ENCODE measurements at regions of chr2 and their contacts with region 1.

Region 1: GRCh38 chr2:217845301-217845700 is 157.5 kb downstream of the TNS1 start:
- DNase-seq: no peak
- H3K4me3 ChIP-seq: no peak overlapping the region
- H3K27ac ChIP-seq: no peak overlapping the region
- H3K4me1 ChIP-seq: no peaks in the 10 kb centered on the region
- H3K27me3 ChIP-seq: no peaks in the 10 kb centered on the region
- CTCF ChIP-seq: no peak
- POLR2A ChIP-seq: no peak

Region 2: DNA sequence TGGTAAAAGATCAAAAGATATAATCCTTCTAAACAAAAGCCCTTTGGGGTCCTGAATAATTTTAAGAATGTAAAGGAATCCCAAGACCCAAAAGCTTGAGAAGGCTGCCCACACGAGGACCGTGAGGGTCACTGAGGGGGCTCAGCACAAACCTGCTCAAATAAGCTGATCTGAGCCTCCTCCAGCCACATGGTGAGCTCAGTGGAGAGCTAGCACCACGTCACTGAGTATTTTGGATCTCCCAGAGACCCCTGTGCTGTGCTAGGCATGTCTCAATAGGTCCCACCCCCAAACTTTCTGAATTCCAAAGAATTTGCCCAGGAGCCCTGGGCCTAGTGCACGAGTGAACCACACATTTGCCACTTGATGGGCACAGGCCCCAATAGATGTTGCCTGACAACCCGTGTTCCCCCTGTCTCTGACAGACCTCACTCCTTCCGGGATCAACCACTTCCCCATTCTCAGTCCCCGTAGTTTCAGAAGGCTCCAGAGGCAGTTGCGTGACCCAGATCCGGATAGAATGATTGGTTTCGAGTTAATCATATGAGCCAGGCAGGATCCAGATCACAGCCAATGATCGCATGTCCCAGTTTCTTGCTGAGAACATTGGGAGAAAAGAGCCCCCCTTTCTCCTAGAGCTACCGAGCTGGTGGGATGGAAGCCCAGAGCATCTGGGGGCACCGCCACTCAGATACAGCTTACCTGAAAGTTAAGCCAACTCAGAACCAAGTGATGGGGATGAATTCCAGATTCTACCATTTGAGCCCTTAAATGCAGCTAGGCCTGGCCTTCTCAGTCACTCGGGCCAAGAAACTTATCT is 46.3 kb before region 1 on chr2:
- intact Hi-C with region 1: no loop called
- DNase-seq: no peak
- H3K4me3 ChIP-seq: no peak overlapping the region
- H3K27ac ChIP-seq: peak overlapping the region; percentile 8 to 10
- H3K4me1 ChIP-seq: no peaks in the 10 kb centered on the region
- H3K27me3 ChIP-seq: no peaks in the 10 kb centered on the region
- CTCF ChIP-seq: no peak
- POLR2A ChIP-seq: no peak

Region 3: DNA sequence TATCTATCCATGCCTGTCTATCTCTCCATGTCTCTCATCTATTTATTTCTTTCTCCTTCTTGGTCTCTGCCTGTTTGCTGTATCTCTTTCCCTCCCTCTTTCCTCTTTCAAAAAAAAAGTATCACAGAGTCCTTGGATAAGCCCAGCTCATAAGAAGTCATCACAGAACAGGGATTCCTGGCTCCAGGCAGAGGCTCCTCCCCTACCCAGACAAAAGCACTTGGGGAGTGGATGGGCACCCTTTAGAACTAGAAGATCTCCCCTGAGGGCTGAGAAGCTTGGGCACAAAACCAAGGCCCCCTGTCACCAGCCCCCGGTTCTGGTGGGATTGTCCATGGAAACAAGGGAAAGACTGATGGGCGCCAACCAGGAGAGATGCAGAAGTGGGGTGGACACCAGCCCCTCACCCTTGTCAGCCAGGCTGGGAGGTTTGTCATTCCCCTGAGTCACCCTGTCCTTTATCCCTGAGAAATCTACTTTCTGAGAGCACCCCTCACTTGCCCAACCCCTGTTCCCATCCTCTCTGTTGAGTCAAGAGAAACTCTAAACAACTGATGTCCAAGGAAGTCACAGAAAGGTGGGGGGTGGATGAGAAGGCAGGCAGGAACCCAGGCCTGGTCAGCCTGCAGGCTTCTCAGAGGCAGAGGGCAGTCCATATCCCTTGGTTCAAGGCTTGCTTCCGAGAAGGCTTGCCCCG is 30.4 kb after region 1 on chr2:
- intact Hi-C with region 1: loop called (anchors 1 kb)
- DNase-seq: no peak
- H3K4me3 ChIP-seq: no peak overlapping the region
- H3K27ac ChIP-seq: peak overlapping the region in 1 of 2 donors; percentile 26
- H3K4me1 ChIP-seq: no peaks in the 10 kb centered on the region
- H3K27me3 ChIP-seq: no peaks in the 10 kb centered on the region
- CTCF ChIP-seq: no peak
- POLR2A ChIP-seq: no peak